Upper lobe of right lung (tissue), 1 donor: ENCODE measurements at regions of chr16 and their contacts with region 1.

Region 1: DNA sequence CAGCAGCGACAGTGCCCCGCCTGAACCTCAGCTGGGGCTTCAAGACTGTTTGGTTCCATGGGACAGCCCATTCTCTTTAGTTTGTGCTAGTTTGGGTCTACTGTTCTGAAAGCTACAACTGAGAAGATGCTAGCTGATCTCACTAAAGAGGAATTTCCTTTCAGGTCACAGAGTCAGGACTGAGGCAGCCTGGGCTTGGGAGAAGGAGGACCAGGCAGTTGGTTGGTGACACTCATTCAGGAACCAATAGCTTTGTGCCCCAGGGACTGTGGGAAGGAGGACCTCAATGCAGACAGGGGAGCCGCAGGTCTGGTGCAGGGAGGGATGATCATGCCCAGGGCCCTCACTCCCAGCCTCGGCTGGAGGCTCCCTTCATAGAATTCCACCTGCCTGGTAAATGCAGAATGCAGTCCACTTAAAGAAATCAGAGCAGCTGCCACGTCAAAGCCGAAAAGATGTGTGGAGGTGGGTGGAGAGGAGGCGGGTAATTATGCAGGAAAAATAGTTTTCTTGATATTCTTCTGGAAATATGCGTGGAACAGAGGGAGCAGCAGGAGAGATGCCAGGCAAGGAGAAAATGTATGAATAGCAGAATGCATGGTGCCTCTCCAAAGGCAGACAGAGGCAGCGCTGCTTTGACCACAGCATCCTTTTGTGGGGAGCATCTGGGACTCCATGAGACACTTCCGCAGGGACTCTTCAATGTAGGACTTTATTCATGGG is 32.6 kb upstream of the ZFP90 start:
- DNase-seq: no peak
- ATAC-seq: no peak
- H3K4me3 ChIP-seq: no peak overlapping the region
- H3K27ac ChIP-seq: no peak overlapping the region
- H3K4me1 ChIP-seq: peaks cover 6% of the 10 kb centered on the region
- H3K27me3 ChIP-seq: no peaks in the 10 kb centered on the region
- CTCF ChIP-seq: no peak

Region 2: DNA sequence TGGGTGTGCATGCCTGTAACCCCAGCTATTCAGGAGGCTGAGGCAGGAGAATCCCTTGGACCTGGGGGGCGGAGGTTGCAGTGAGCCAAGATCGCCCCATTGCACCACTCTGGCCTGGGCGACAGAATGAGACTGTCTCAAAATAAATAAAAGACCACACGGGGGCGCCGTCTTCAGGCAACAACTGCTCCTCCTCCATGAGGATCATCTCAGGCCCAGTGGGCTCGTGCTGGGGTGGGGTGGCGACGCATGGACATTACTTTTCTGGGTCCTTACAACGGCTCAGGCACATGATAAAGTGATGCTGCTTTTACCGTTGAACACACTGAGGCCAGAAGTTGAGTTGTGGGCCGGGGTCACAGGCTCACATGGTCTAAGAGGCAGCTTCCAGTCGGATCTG is 139.5 kb before region 1 on chr16:
- intact Hi-C with region 1: no loop called
- DNase-seq: no peak
- ATAC-seq: no peak
- H3K4me3 ChIP-seq: no peak overlapping the region
- H3K27ac ChIP-seq: no peak overlapping the region
- H3K4me1 ChIP-seq: peaks cover 8% of the 10 kb centered on the region
- H3K27me3 ChIP-seq: no peaks in the 10 kb centered on the region
- CTCF ChIP-seq: peak; percentile 38

Region 3: DNA sequence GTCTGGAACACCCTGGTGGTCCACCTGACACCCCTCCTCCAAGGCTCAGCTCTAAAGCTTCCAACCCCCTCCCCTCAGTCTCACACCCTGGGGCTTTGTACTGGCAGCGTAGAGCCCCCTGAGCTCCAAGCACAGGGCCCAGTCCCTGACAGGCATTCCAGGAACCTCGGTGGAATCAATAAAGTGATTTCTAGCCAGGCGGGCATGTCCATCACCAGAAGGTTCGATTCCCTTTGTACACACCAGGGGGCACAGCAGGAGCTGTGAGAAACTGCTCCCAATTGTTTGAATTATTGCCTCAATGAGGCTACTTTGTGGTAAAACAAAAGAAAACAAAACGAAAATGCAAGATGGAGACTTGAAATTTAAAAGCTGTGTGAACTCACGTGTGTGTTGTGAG is 110.0 kb before region 1 on chr16:
- intact Hi-C with region 1: loop called (anchors 5 kb)
- DNase-seq: no peak
- ATAC-seq: peak; percentile 72
- H3K4me3 ChIP-seq: no peak overlapping the region
- H3K27ac ChIP-seq: no peak overlapping the region
- H3K4me1 ChIP-seq: no peaks in the 10 kb centered on the region
- H3K27me3 ChIP-seq: no peaks in the 10 kb centered on the region
- CTCF ChIP-seq: peak; percentile 76

Region 4: GRCh38 chr16:68436581-68436980 is 69.9 kb before region 1 on chr16:
- intact Hi-C with region 1: no loop called
- DNase-seq: no peak
- ATAC-seq: no peak
- H3K4me3 ChIP-seq: no peak overlapping the region
- H3K27ac ChIP-seq: no peak overlapping the region
- H3K4me1 ChIP-seq: no peaks in the 10 kb centered on the region
- H3K27me3 ChIP-seq: no peaks in the 10 kb centered on the region
- CTCF ChIP-seq: peak; percentile 27